ENCODE measurements at regions of chr17 and their contacts with region 1.

Region 1: DNA sequence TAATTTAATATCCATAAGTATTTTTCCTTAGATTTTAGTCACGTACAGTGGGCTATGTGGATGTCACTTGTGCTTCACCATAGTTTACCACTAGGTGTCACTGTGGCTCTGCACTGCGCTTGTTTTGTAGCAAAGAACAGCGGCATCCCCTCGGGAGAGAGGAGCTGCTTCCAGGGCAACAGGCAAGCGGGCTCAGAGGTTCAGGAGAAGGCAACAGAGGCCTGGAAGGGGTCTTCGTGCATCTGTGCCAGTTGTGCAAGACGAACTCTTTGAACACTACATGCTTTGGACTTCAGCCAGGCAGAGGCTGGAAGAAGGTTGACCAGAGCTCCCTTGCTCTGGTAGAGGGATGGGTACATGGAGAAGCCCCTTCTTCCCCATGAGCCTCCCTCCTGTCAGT is 20.6 kb downstream of the CYB561 start:
- DNase-seq: peak in 9 of 10 donors; percentile 57 to 96 (median 75)

Region 2: DNA sequence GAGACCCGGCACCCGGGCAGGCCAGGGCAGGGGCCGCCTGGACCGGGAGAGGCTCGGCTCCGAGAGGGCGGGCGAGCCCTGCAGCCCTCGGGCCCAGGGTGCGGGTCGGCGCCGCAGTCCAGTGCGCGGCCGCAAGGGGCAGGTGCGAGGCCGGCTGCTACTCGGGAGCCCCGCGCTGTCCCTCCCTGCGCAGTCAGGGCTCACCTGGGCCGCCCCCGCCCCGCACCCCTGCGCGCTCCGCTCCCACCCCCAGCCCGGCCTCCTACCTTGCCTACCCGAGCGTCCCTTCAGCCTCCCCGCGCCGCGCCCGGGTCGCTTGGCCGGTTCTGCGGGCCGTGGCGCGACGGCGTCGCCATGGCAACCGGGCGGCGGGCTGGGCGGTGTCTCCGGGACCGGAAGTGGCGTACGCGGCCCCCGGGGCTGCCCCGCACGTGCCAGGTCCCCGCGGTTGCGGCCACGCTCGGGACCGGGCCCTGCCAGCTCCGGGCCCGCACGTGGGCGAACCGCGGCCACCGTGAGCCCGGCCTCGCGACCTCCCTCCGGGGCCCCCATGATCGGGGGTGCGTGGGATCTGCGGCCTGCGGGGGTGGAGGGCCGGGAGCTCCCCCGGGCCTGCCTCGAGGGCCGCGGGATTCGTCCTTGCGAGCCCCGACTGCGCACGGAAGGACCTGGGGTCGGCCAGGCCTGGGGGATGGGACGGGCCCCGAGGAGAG is 20.7 kb after region 1 on chr17 and contains the start of gene CYB561:
- intact Hi-C with region 1: no loop called
- DNase-seq: peak in 9 of 10 donors; percentile 36 to 95 (median 66)

Region 3: GRCh38 chr17:63478791-63479494 is 53.5 kb after region 1 on chr17:
- intact Hi-C with region 1: loop called (anchors 1 kb)
- DNase-seq: peak in 9 of 10 donors; percentile 42 to 94 (median 62)

Region 4: DNA sequence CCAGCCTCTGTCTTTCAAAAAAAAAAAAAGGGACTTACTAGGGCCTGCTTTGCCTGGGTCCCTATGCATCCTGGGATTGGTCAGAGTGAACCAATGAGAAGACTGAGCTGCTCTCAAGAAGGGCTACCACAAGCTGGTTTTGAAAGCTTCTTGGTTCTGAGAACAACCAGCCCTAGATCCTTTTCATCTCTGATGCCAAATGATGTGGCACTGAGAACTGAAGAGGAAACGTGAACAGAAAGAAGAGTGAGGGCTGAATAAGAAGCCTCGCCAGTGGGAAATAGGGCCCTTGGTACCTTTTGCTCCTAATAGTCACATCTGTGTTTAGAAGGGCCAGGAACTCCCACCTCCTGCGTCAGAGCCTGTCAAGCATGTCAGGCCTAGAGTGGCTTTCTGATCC is 185.9 kb after region 1 on chr17:
- intact Hi-C with region 1: loop called (anchors 1 kb)
- DNase-seq: no peak